Activated T-helper 2 cell treated with anti-CD3 and anti-CD28 coated beads, Interferon-gamma antibody, Interleukin-2, Interleukin-4, amounts not matched to agents 10 μg/mL and 5 μg/mL and 100 μg/mL, durations not matched to agents 14 hours and 24 hours and 36 hours (primary cell): ENCODE measurements at regions of chr3 and their contacts with region 1.

Region 1: GRCh38 chr3:45995236-45996192 is at the start of gene FYCO1:
- DNase-seq: peak; percentile 80
- H3K4me3 Mint-ChIP-seq: peak within 1 kb of the TSS; percentile 85
- H3K27ac Mint-ChIP-seq: peak within 1 kb of the TSS; percentile 95
- H3K4me1 Mint-ChIP-seq: peaks cover 44% of the 10 kb centered on the region
- H3K27me3 Mint-ChIP-seq: peaks cover 13% of the 10 kb centered on the region
- total RNA-seq, gene FYCO1: 19.6 and 20.2 TPM in 2 replicates

Region 2: GRCh38 chr3:45446706-45447105 is 548.8 kb before region 1 on chr3:
- intact Hi-C with region 1: no loop called
- DNase-seq: no peak
- H3K4me3 Mint-ChIP-seq: no peak overlapping the region
- H3K27ac Mint-ChIP-seq: no peak overlapping the region
- H3K4me1 Mint-ChIP-seq: no peaks in the 10 kb centered on the region
- H3K27me3 Mint-ChIP-seq: no peaks in the 10 kb centered on the region

Region 3: GRCh38 chr3:45950686-45951600 is 44.6 kb before region 1 on chr3:
- intact Hi-C with region 1: loop called (anchors 2 kb)
- DNase-seq: no peak
- H3K4me3 Mint-ChIP-seq: no peak overlapping the region
- H3K27ac Mint-ChIP-seq: peak overlapping the region; percentile 78
- H3K4me1 Mint-ChIP-seq: peaks cover 76% of the 10 kb centered on the region
- H3K27me3 Mint-ChIP-seq: no peaks in the 10 kb centered on the region

Region 4: GRCh38 chr3:45962033-45962432 is 33.5 kb before region 1 on chr3:
- intact Hi-C with region 1: loop called (anchors 1 kb)
- DNase-seq: no peak
- H3K4me3 Mint-ChIP-seq: no peak overlapping the region
- H3K27ac Mint-ChIP-seq: peak overlapping the region; percentile 63
- H3K4me1 Mint-ChIP-seq: peaks cover 56% of the 10 kb centered on the region
- H3K27me3 Mint-ChIP-seq: no peaks in the 10 kb centered on the region

Region 5: DNA sequence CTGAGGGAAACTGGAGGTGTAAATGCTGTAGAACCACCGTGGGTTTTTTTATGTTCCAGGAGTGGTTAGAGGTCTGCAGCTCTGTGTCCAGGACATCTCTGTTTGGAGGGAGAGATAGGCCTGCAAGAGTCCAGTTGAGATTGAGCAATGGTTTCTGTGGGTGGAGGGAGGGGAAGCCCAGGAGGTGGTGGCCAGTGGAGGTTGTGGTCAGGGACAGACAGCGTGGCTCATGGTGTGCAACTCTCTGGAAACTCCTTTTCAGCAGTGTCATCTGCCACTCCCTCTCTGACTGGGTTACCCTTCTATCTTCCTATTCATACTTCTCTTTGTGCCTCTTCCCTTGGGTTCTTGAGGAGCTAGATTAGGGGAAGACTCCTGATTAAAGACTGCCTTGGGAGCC is 22.2 kb after region 1 on chr3:
- intact Hi-C with region 1: loop called (anchors 1 kb)
- DNase-seq: no peak
- H3K4me3 Mint-ChIP-seq: peak overlapping the region; percentile 24
- H3K27ac Mint-ChIP-seq: peak overlapping the region; percentile 70
- H3K4me1 Mint-ChIP-seq: peaks cover 48% of the 10 kb centered on the region
- H3K27me3 Mint-ChIP-seq: peaks cover 7% of the 10 kb centered on the region

Region 6: GRCh38 chr3:46070595-46071093 is 75.1 kb after region 1 on chr3:
- intact Hi-C with region 1: loop called (anchors 1 kb)
- DNase-seq: no peak
- H3K4me3 Mint-ChIP-seq: peak overlapping the region; percentile 3
- H3K27ac Mint-ChIP-seq: peak overlapping the region; percentile 70
- H3K4me1 Mint-ChIP-seq: peaks cover 60% of the 10 kb centered on the region
- H3K27me3 Mint-ChIP-seq: peaks cover 26% of the 10 kb centered on the region

Region 7: DNA sequence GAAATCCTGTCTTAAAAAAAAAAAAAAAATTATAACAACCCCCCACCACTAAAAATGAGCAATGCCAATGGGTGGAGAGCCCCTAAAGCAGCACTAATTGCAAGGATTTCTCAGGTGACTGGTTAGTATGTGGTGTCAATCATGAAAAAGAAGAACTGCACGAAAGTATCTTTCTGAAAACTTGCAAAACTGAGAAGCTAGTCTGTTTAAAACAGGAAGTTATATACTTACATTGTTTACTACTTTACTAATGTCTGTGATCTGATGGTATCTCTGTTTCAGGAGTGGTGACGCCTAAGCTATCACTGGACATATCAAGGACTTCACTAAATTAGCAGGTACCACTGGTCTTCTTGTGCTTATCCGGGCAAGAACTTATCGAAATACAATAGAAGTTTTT is 246.6 kb after region 1 on chr3 and contains the start of gene CCR3:
- intact Hi-C with region 1: no loop called
- DNase-seq: no peak
- H3K4me3 Mint-ChIP-seq: no peak within 1 kb of the TSS
- H3K27ac Mint-ChIP-seq: no peak within 1 kb of the TSS
- H3K4me1 Mint-ChIP-seq: peaks cover 9% of the 10 kb centered on the region
- H3K27me3 Mint-ChIP-seq: peaks cover 57% of the 10 kb centered on the region
- total RNA-seq, gene CCR3: not detected in 2 replicates